ENCODE measurements at regions of chr5 and their contacts with region 1.

Region 1: GRCh38 chr5:126544087-126544740 is 50.8 kb downstream of the ALDH7A1 start:
- H3K4me3 Mint-ChIP-seq: no peak overlapping the region
- H3K27ac Mint-ChIP-seq: no peak overlapping the region
- H3K4me1 Mint-ChIP-seq: no peaks in the 10 kb centered on the region
- H3K27me3 Mint-ChIP-seq: no peaks in the 10 kb centered on the region

Region 2: GRCh38 chr5:126339215-126339805 is 204.9 kb before region 1 on chr5:
- intact Hi-C with region 1: loop called (anchors 1 kb)
- H3K4me3 Mint-ChIP-seq: no peak overlapping the region
- H3K27ac Mint-ChIP-seq: no peak overlapping the region
- H3K4me1 Mint-ChIP-seq: no peaks in the 10 kb centered on the region
- H3K27me3 Mint-ChIP-seq: peaks cover 7% of the 10 kb centered on the region

Region 3: GRCh38 chr5:126354012-126354857 is 190.0 kb before region 1 on chr5:
- intact Hi-C with region 1: loop called (anchors 1 kb)
- H3K4me3 Mint-ChIP-seq: peak overlapping the region; percentile 45
- H3K27ac Mint-ChIP-seq: no peak overlapping the region
- H3K4me1 Mint-ChIP-seq: peaks cover 38% of the 10 kb centered on the region
- H3K27me3 Mint-ChIP-seq: peaks cover 14% of the 10 kb centered on the region

Region 4: DNA sequence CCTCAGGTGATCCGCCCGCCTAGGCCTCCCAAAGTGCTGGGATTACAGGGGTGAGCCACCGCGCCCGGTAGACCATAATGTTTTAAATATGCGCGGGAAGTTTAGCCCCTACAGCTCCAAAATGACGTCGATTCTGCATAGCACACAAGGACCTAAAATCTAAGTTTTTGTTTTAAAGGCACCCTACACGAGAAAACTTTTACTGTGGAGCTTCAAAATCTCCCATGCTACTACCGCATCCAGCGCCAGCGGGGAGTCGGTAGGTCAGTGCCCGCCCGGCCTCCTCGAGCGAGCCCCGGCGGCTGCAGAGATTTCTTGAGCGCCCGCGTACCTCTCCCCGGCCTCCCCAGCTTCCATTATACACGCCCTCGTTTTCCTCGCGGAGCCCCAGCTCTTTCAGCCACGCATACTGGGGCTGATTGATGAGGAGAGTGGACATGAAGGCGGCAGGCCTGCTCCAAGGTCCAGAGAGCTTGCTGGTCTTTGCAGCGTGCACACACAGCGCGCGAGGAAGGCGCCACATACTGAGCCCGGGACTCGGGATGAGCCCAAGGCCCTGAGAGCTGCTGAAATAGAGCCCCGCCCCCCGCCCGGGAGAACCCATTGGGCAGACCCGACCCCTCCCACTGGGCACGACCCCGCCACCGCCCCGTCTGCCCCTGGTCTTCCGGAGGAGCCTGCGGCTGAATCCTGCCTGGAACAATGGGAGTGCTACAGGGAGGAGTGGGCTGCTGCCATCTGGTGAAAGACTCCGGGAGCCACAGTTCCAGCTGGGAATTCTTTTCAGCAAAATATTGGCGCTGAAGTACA is 50.7 kb after region 1 on chr5 and contains the start of gene ALDH7A1:
- intact Hi-C with region 1: loop called (anchors 5 kb)
- H3K4me3 Mint-ChIP-seq: peak within 1 kb of the TSS; percentile 85
- H3K27ac Mint-ChIP-seq: peak within 1 kb of the TSS; percentile 57
- H3K4me1 Mint-ChIP-seq: peaks cover 35% of the 10 kb centered on the region
- H3K27me3 Mint-ChIP-seq: peaks cover 24% of the 10 kb centered on the region

Region 5: GRCh38 chr5:126801992-126802294 is 257.7 kb after region 1 on chr5:
- intact Hi-C with region 1: loop called (anchors 5 kb)
- H3K4me3 Mint-ChIP-seq: no peak overlapping the region
- H3K27ac Mint-ChIP-seq: no peak overlapping the region
- H3K4me1 Mint-ChIP-seq: peaks cover 44% of the 10 kb centered on the region
- H3K27me3 Mint-ChIP-seq: no peaks in the 10 kb centered on the region

Measured in dendritic cell treated with granulocyte-macrophage colony-stimulating factor and Interleukin-4, amounts not matched to agents 40 ng/mL and 50 ng/mL, for 4 days (primary cell).